ENCODE measurements at regions of chr14 and their contacts with region 1.

Region 1: GRCh38 chr14:34722717-34723545 is 8.5 kb upstream of the CFL2 start:
- DNase-seq: peak; percentile 38
- H3K4me3 ChIP-seq: no peak overlapping the region
- H3K27ac ChIP-seq: no peak overlapping the region
- H3K4me1 ChIP-seq: peaks cover 2% of the 10 kb centered on the region
- H3K27me3 ChIP-seq: no peaks in the 10 kb centered on the region
- CTCF ChIP-seq: peak; percentile 79 to 82

Region 2: DNA sequence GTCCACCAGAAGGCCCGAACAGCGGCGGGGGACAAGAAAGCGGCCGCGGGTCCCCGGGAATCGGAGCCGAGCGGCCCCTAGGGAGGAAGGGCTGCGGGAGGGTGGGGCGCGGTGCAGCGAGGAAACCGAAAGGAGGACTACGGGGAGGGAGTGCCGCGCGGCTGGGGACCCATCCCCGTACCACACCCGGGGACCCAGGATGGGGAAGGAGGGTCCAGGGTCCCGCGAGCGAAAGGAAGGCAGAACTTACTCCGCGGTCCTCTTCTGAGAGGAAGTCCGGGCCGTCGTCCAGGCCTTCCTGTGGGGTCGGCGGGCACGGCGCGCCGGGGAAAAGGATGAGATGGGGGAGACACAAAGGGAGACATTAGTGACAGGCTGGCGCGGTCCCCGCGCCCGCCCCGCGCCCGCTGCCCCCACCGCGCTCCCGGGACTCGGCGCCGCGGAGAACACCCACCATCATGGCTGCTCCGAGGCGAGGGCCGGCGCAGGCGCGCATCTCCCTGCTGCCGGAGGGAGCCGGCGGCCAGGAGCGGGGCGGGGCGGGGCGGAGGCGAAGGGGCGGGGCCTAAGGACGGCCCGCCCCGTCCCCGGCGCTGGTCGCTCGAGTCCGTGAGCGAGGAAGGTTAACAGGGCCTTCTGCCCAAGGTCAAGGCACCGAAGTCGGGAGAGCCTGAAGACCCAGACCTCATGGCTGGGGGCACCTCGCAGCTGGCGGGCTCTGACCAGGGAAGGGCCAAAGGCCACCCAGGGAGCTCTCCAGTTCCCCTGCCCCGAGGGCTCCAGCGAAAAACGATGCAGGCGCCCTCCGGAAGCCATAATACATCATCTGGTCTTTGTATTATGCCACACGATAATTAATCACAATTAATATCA is 93.0 kb before region 1 on chr14 and contains the start of gene SNX6:
- CTCF ChIA-PET with region 1: no interaction called
- dilution Hi-C with region 1: no loop called
- in situ Hi-C with region 1: no loop called
- intact Hi-C with region 1: no loop called
- DNase-seq: peak; percentile 66
- H3K4me3 ChIP-seq: peak within 1 kb of the TSS; percentile 80 to 98 (median 80)
- H3K27ac ChIP-seq: peak within 1 kb of the TSS; percentile 77
- H3K4me1 ChIP-seq: no peaks in the 10 kb centered on the region
- H3K27me3 ChIP-seq: no peaks in the 10 kb centered on the region
- CTCF ChIP-seq: no peak
- total RNA-seq, gene SNX6: 81.2 to 98.4 TPM

Region 3: GRCh38 chr14:34671716-34672115 is 51.2 kb before region 1 on chr14:
- CTCF ChIA-PET with region 1: interaction called, 4 read pairs
- dilution Hi-C with region 1: no loop called
- in situ Hi-C with region 1: loop called (anchors 5 to 10 kb)
- intact Hi-C with region 1: loop called (anchors 1 kb)
- DNase-seq: no peak
- H3K4me3 ChIP-seq: no peak overlapping the region
- H3K27ac ChIP-seq: no peak overlapping the region
- H3K4me1 ChIP-seq: peaks cover 4% of the 10 kb centered on the region
- H3K27me3 ChIP-seq: no peaks in the 10 kb centered on the region
- CTCF ChIP-seq: no peak

Region 4: GRCh38 chr14:34678306-34678705 is 44.6 kb before region 1 on chr14:
- CTCF ChIA-PET with region 1: interaction called, 13 read pairs
- dilution Hi-C with region 1: no loop called
- in situ Hi-C with region 1: loop called (anchors 5 to 10 kb)
- intact Hi-C with region 1: no loop called
- DNase-seq: peak; percentile 42
- H3K4me3 ChIP-seq: no peak overlapping the region
- H3K27ac ChIP-seq: peak overlapping the region; percentile 80
- H3K4me1 ChIP-seq: peaks cover 14% of the 10 kb centered on the region
- H3K27me3 ChIP-seq: no peaks in the 10 kb centered on the region
- CTCF ChIP-seq: no peak

Measured in mammary epithelial cell (primary cell).